BJ (cell line): ENCODE measurements at regions of chr3 and their contacts with region 1.

Region 1: GRCh38 chr3:107429320-107430181 is 52.3 kb downstream of the CCDC54 start:
- DNase-seq: peak; percentile 45
- H3K4me3 ChIP-seq: peak overlapping the region; percentile 42
- H3K27me3 ChIP-seq: no peaks in the 10 kb centered on the region
- CTCF ChIP-seq: peak; percentile 92

Region 2: GRCh38 chr3:107284612-107285011 is 144.9 kb before region 1 on chr3:
- CTCF ChIA-PET with region 1: interaction called, 17 read pairs
- POLR2A ChIA-PET with region 1: no interaction called
- DNase-seq: no peak
- H3K4me3 ChIP-seq: no peak overlapping the region
- H3K27me3 ChIP-seq: no peaks in the 10 kb centered on the region
- CTCF ChIP-seq: no peak

Region 3: GRCh38 chr3:107414325-107414964 is 15.1 kb before region 1 on chr3:
- CTCF ChIA-PET with region 1: interaction called, 44 read pairs
- POLR2A ChIA-PET with region 1: interaction called, 6 read pairs
- DNase-seq: no peak
- H3K4me3 ChIP-seq: no peak overlapping the region
- H3K27me3 ChIP-seq: no peaks in the 10 kb centered on the region
- CTCF ChIP-seq: no peak

Region 4: DNA sequence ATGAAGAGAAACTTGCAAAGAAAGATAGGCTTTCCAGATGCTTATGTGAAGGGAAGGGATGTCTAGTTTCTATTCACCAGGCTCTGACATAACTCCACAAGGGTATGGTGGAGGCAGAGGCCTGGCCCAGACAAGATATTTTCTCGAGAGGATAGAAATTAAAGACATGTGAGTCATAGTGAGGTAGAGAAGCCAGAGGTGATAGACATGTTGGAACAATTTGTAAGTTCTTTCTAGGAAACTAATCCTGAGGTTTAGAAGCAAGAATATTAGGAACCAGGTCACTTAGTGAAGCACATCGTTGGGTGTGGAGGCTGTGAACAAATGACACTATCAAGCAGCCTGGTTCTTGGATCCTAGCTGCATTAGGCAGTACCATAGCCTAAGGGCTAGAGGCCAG is 270.1 kb after region 1 on chr3:
- CTCF ChIA-PET with region 1: no interaction called
- POLR2A ChIA-PET with region 1: no interaction called
- DNase-seq: no peak
- H3K4me3 ChIP-seq: no peak overlapping the region
- H3K27me3 ChIP-seq: no peaks in the 10 kb centered on the region
- CTCF ChIP-seq: no peak